ENCODE measurements at regions of chr21 and their contacts with region 1.

Region 1: DNA sequence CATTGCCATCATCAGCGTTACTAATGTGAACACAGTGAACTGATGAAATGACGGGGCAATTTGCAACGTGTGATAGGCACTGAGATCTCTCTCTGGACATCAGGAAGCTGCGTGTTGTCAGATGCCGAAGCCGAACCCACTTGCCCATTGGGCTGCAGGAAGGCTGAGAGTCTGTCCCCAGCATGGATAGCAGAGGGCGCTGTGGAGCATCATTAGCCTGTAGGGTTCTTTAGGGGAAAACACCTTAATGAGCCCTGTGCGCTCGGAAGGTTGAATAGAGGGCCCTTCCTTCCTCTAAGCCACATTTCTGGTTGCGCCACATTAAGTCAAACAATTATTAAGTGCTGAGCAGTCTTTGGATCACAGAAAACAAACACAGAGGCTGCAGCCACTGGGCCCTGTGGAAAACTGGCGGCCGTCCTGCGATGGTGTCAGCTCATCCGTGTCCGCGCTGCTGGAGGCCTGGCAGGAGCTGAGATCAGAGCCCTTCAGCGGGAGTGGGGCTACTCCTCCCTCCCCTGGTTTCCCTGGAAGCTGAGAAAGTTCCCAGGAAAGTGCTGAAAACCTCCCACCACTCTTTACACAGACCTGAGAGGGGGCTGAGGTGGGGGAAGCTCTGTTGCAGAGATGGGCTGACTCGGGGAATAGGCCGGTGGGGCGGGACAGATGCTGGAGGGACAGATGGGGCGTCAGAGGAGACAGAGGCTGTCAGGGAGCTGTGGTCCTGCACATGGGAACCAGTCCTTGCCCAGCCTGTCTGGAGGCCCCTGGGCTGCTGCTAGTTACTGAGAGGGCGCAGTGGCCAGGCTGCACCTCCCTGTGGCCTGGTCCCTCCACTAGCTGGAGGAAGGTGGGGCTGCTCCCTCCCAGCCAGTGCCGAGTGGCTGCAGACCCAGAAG is 12.7 kb downstream of the TFF2 start:
- DNase-seq: peak; percentile 90
- ATAC-seq: peak; percentile 81
- H3K4me3 Mint-ChIP-seq: peak overlapping the region; percentile 40; the same call in 1 of the 2 replicates
- H3K27ac Mint-ChIP-seq: peak overlapping the region; percentile 97
- H3K4me1 Mint-ChIP-seq: peaks cover 39% of the 10 kb centered on the region
- H3K27me3 Mint-ChIP-seq: no peaks in the 10 kb centered on the region
- CTCF ChIP-seq: peak; percentile 52

Region 2: GRCh38 chr21:42145569-42146272 is 192.4 kb before region 1 on chr21:
- CTCF ChIA-PET with region 1: interaction called, 10 read pairs
- POLR2A ChIA-PET with region 1: no interaction called
- DNase-seq: peak; percentile 70
- ATAC-seq: peak; percentile 82
- H3K4me3 Mint-ChIP-seq: no peak overlapping the region
- H3K27ac Mint-ChIP-seq: no peak overlapping the region
- H3K4me1 Mint-ChIP-seq: no peaks in the 10 kb centered on the region
- H3K27me3 Mint-ChIP-seq: no peaks in the 10 kb centered on the region
- CTCF ChIP-seq: peak; percentile 89

Region 3: GRCh38 chr21:42209819-42210479 is 128.1 kb before region 1 on chr21:
- CTCF ChIA-PET with region 1: no interaction called
- POLR2A ChIA-PET with region 1: no interaction called
- DNase-seq: no peak
- ATAC-seq: no peak
- H3K4me3 Mint-ChIP-seq: no peak overlapping the region
- H3K27ac Mint-ChIP-seq: no peak overlapping the region
- H3K4me1 Mint-ChIP-seq: peaks cover 17% of the 10 kb centered on the region
- H3K27me3 Mint-ChIP-seq: peaks cover 12% of the 10 kb centered on the region
- CTCF ChIP-seq: no peak

Region 4: DNA sequence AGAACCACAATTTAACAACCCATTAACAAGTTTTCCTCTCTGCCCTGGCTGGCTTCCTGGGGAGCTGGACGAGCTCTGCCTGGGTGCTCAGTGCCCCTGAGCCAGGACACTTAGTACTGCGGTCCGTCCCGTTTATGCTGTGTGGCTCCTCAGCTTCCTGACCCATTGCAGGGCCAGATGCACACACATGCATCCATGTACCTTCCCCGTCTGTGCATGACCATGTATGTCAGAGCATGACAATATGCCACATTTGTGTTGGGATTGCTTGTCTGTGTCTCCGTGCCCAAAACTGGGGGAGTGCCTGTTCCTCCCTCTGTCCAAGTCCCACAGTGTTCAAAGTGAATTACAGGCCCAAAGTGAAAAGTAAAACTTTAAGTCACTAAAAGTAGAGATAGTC is 13.2 kb before region 1 on chr21:
- CTCF ChIA-PET with region 1: interaction called, 165 read pairs
- POLR2A ChIA-PET with region 1: no interaction called
- DNase-seq: no peak
- ATAC-seq: no peak
- H3K4me3 Mint-ChIP-seq: no peak overlapping the region
- H3K27ac Mint-ChIP-seq: no peak overlapping the region
- H3K4me1 Mint-ChIP-seq: peaks cover 9% of the 10 kb centered on the region; the same call in 1 of the 2 replicates
- H3K27me3 Mint-ChIP-seq: peaks cover 6% of the 10 kb centered on the region
- CTCF ChIP-seq: no peak

Region 5: DNA sequence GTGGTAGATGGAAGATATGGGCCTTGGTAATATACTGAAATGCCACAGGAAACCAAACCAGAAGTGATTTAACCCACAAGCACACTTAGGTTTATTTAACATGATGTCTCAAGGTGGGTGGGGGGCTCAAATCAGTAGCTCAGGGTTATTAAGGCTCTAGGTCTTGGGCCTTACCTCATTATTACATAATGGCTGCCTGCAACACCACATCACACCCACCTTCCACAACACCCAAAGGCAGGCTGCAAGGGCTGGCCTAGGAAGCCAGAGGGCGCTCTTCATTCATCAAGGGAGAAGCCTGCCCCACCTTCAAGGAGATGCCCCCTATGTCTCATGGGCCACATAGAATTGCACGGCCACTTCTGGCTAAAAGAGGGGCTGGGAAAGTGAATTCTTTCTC is 22.2 kb after region 1 on chr21:
- CTCF ChIA-PET with region 1: interaction called, 10 read pairs
- POLR2A ChIA-PET with region 1: no interaction called
- DNase-seq: no peak
- ATAC-seq: no peak; the same call in 1 of the 2 replicates
- H3K4me3 Mint-ChIP-seq: no peak overlapping the region
- H3K27ac Mint-ChIP-seq: no peak overlapping the region
- H3K4me1 Mint-ChIP-seq: no peaks in the 10 kb centered on the region
- H3K27me3 Mint-ChIP-seq: no peaks in the 10 kb centered on the region; the same call in 1 of the 2 replicates
- CTCF ChIP-seq: peak; percentile 44; the same call in 1 of the 2 replicates

Region 6: GRCh38 chr21:42381334-42381984 is 43.4 kb after region 1 on chr21:
- CTCF ChIA-PET with region 1: interaction called, 24 read pairs
- POLR2A ChIA-PET with region 1: no interaction called
- DNase-seq: peak; percentile 55
- ATAC-seq: peak; percentile 94
- H3K4me3 Mint-ChIP-seq: no peak overlapping the region
- H3K27ac Mint-ChIP-seq: no peak overlapping the region
- H3K4me1 Mint-ChIP-seq: peaks cover 4% of the 10 kb centered on the region
- H3K27me3 Mint-ChIP-seq: peaks cover 3% of the 10 kb centered on the region; the same call in 1 of the 2 replicates
- CTCF ChIP-seq: peak; percentile 48; the same call in 1 of the 2 replicates

Measured in WTC11 (cell line).